MCF 10A (cell line): ENCODE measurements at regions of chr1 and their contacts with region 1.

Region 1: DNA sequence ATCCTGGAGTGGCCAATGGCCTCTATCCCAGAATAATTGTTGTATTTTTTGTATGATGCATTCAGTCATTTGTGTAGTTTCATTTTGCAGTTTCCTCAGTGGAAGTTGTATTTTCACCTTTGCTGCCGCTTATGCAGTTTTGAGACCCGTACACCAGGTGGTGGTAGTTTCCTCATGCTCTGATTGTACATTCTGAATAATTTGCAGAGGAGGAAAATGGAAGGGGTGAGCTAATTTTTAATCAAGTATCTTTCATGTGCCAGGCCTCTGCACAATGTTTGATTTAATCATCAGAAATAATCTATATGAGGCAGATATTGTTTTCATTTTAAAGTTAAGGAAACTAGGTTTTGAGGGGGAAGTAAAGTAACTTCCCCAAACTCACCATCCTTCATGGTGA is 29.5 kb downstream of the HLX start:
- DNase-seq: peak; percentile 56
- H3K4me3 Mint-ChIP-seq: no peak overlapping the region
- H3K27ac Mint-ChIP-seq: no peak overlapping the region
- H3K4me1 Mint-ChIP-seq: peaks cover 21% of the 10 kb centered on the region
- H3K27me3 Mint-ChIP-seq: no peaks in the 10 kb centered on the region
- CTCF ChIP-seq: peak; percentile 58

Region 2: DNA sequence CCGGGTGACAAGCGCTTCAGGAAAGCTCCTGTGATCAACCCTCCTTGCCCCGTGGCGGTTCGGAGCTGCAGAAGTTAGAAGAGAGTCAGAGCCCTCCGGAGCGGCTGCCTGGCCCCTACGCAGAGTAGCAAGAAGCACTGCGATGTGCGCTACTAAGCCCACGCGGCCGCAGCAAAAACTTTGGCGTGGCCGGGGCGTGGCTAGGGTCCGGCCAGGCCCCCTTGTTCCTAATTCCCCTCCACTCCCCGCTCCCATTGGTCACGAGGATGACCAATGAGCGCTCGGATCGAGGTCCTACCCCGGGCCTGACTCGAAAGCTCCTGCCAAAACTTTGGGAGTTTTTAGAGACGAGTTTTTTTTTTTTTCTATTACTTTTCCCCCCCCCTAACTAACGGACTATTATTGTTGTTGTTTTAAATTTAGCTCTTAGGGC is 29.7 kb before region 1 on chr1 and contains the start of gene HLX:
- CTCF ChIA-PET with region 1: interaction called, 7 read pairs
- POLR2A ChIA-PET with region 1: no interaction called
- intact Hi-C with region 1: loop called (anchors 1 kb)
- DNase-seq: peak; percentile 81
- H3K4me3 Mint-ChIP-seq: peak within 1 kb of the TSS; percentile 75
- H3K27ac Mint-ChIP-seq: peak within 1 kb of the TSS; percentile 62
- H3K4me1 Mint-ChIP-seq: peaks cover 21% of the 10 kb centered on the region
- H3K27me3 Mint-ChIP-seq: no peaks in the 10 kb centered on the region
- CTCF ChIP-seq: no peak
- total RNA-seq, gene HLX: 2.1 and 2.3 TPM in 2 replicates

Region 3: GRCh38 chr1:220957233-220957605 is 48.5 kb after region 1 on chr1:
- CTCF ChIA-PET with region 1: interaction called, 6 read pairs
- POLR2A ChIA-PET with region 1: no interaction called
- intact Hi-C with region 1: loop called (anchors 2 kb)
- DNase-seq: peak; percentile 97
- H3K4me3 Mint-ChIP-seq: peak overlapping the region; percentile 33
- H3K27ac Mint-ChIP-seq: peak overlapping the region; percentile 89
- H3K4me1 Mint-ChIP-seq: peaks cover 21% of the 10 kb centered on the region
- H3K27me3 Mint-ChIP-seq: no peaks in the 10 kb centered on the region
- CTCF ChIP-seq: no peak

Region 4: GRCh38 chr1:220990427-220991339 is 81.9 kb after region 1 on chr1:
- CTCF ChIA-PET with region 1: interaction called, 6 read pairs
- POLR2A ChIA-PET with region 1: no interaction called
- intact Hi-C with region 1: loop called (anchors 1 kb)
- DNase-seq: peak; percentile 79
- H3K4me3 Mint-ChIP-seq: no peak overlapping the region
- H3K27ac Mint-ChIP-seq: no peak overlapping the region
- H3K4me1 Mint-ChIP-seq: peaks cover 15% of the 10 kb centered on the region
- H3K27me3 Mint-ChIP-seq: peaks cover 10% of the 10 kb centered on the region
- CTCF ChIP-seq: peak; percentile 32